MCF 10A (cell line): ENCODE measurements at regions of chr20 and their contacts with region 1.

Region 1: GRCh38 chr20:35771689-35772562 is at the start of gene PHF20:
- DNase-seq: peak; percentile 92
- H3K4me3 Mint-ChIP-seq: peak within 1 kb of the TSS; percentile 91
- H3K27ac Mint-ChIP-seq: peak within 1 kb of the TSS; percentile 97
- H3K4me1 Mint-ChIP-seq: peaks cover 51% of the 10 kb centered on the region
- H3K27me3 Mint-ChIP-seq: no peaks in the 10 kb centered on the region
- CTCF ChIP-seq: no peak
- total RNA-seq, gene PHF20: 64.2 and 74.7 TPM in 2 replicates

Region 2: DNA sequence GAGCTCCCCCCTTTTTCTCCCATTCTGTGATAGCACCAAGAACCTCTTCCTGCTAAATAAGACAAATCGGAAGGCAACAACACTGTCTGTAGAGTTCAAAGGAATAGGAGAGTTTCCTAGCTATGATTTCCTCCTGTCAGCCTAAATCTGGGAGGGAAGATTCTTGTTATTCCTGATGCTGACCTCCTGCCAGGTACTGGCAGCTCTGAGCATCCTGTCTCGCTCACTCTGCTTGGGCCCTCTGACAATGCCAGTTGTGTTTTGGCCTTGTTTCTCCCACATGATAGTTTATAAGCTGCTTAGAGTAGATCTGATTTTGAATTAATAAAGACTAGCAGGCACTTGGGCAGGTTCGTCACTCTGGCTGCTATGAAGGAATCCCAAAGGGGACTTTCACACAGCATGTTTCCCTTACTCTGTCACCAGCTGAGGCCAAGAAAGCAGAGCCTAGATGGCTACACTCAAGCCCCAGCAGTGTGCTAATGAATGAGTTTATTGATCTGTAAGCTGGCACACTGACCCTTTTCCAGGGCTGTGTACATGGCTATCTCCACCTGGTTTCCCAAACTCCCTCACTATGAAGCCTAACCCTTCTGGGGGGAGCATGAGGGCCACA is 412.5 kb before region 1 on chr20:
- CTCF ChIA-PET with region 1: no interaction called
- POLR2A ChIA-PET with region 1: no interaction called
- intact Hi-C with region 1: no loop called
- DNase-seq: no peak
- H3K4me3 Mint-ChIP-seq: no peak overlapping the region
- H3K27ac Mint-ChIP-seq: no peak overlapping the region
- H3K4me1 Mint-ChIP-seq: peaks cover 19% of the 10 kb centered on the region
- H3K27me3 Mint-ChIP-seq: no peaks in the 10 kb centered on the region
- CTCF ChIP-seq: no peak

Region 3: DNA sequence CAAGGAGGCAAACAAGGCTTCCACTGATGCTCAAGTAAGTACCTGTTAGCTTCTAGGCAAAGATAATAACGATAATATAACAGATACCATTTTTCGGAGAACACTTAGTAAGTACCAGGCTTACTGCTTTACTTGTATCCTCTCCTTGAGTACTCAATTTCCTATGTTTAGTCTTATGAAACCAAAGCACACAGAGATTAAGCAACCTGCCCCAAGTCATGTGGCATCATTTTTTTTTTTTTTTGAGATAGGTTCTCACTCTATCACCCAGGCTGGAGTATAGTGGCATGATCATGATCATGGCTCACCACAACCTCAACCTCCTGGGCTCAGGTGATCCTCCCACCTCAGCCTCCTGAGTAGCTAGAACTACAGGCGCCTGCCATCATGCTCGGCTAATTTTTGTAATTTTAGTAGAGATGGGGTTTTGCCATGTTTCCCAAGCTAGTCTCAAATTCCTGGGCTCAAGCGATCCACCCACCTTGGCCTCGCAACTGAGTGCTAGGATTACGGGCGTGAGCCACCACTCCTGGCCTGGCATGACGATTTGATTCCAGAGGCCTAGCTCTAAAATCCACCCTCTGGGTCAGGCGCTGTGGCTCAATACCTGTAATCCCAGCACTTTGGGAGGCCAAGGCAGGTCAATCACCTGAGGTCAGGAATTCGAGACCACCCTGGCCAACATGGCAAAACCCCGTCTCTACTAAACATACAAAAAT is 142.3 kb before region 1 on chr20:
- CTCF ChIA-PET with region 1: no interaction called
- POLR2A ChIA-PET with region 1: no interaction called
- intact Hi-C with region 1: no loop called
- DNase-seq: no peak
- H3K4me3 Mint-ChIP-seq: no peak overlapping the region
- H3K27ac Mint-ChIP-seq: no peak overlapping the region
- H3K4me1 Mint-ChIP-seq: peaks cover 4% of the 10 kb centered on the region
- H3K27me3 Mint-ChIP-seq: no peaks in the 10 kb centered on the region
- CTCF ChIP-seq: no peak

Region 4: GRCh38 chr20:35652641-35653429 is 119.1 kb before region 1 on chr20:
- CTCF ChIA-PET with region 1: no interaction called
- POLR2A ChIA-PET with region 1: no interaction called
- intact Hi-C with region 1: no loop called
- DNase-seq: no peak
- H3K4me3 Mint-ChIP-seq: no peak overlapping the region
- H3K27ac Mint-ChIP-seq: no peak overlapping the region
- H3K4me1 Mint-ChIP-seq: peaks cover 7% of the 10 kb centered on the region
- H3K27me3 Mint-ChIP-seq: no peaks in the 10 kb centered on the region
- CTCF ChIP-seq: no peak

Region 5: GRCh38 chr20:35757098-35757705 is 14.7 kb before region 1 on chr20:
- CTCF ChIA-PET with region 1: interaction called, 3 read pairs
- POLR2A ChIA-PET with region 1: interaction called, 12 read pairs
- intact Hi-C with region 1: no loop called
- DNase-seq: no peak
- H3K4me3 Mint-ChIP-seq: no peak overlapping the region
- H3K27ac Mint-ChIP-seq: no peak overlapping the region
- H3K4me1 Mint-ChIP-seq: peaks cover 13% of the 10 kb centered on the region
- H3K27me3 Mint-ChIP-seq: no peaks in the 10 kb centered on the region
- CTCF ChIP-seq: no peak